Activated CD4-positive, alpha-beta T cell treated with anti-CD3 and anti-CD28 coated beads, Interleukin-2, amount 10 ng/mL, durations not matched to agents 24 days and 14 days (primary cell): ENCODE measurements at regions of chr15 and their contacts with region 1.

Region 1: DNA sequence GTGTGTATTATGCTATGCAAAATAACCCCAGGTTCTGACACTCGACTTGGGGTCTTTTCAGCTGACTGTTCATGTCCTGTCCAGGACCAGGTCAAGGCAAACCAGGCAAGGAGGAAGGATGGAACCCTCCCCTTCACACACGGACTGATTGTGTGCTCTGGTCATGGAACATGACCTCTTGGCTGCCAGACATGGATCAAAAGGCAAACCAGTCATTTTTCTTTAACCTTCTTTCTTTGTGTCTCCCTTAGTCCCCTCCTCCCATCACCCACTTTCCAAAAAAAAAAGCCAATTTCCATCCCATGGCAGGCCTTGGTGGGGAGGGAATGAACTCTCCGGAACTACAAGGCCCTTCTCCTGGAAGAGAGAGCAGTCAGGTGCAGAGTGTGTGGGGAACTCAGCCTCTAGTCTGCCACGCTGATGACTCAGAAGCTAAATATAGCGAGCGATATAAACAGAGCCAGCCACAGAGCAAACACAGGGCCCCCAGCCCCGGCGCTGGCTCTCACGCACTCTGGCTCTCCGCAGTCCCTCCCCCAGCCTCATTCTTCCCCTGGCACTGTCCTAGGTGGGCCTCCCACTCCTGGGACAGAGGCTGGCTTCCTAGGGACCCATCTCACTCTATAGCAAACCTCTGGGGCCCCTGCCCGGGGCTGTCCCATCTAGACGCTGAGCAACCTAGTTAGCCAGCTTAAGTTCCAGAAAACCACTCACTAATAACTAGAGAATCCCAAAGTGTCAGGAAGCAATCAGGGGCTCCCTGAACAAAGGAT is 10.0 kb downstream of the BMF start:
- DNase-seq: peak; percentile 92
- H3K4me3 Mint-ChIP-seq: peak overlapping the region; percentile 79
- H3K27ac Mint-ChIP-seq: peak overlapping the region; percentile 97
- H3K4me1 Mint-ChIP-seq: peaks cover 79% of the 10 kb centered on the region
- H3K27me3 Mint-ChIP-seq: no peaks in the 10 kb centered on the region

Region 2: GRCh38 chr15:40064221-40064894 is 34.3 kb before region 1 on chr15:
- intact Hi-C with region 1: loop called (anchors 1 kb)
- DNase-seq: no peak
- H3K4me3 Mint-ChIP-seq: peak overlapping the region; percentile 45
- H3K27ac Mint-ChIP-seq: peak overlapping the region; percentile 85
- H3K4me1 Mint-ChIP-seq: peaks cover 26% of the 10 kb centered on the region
- H3K27me3 Mint-ChIP-seq: no peaks in the 10 kb centered on the region

Region 3: DNA sequence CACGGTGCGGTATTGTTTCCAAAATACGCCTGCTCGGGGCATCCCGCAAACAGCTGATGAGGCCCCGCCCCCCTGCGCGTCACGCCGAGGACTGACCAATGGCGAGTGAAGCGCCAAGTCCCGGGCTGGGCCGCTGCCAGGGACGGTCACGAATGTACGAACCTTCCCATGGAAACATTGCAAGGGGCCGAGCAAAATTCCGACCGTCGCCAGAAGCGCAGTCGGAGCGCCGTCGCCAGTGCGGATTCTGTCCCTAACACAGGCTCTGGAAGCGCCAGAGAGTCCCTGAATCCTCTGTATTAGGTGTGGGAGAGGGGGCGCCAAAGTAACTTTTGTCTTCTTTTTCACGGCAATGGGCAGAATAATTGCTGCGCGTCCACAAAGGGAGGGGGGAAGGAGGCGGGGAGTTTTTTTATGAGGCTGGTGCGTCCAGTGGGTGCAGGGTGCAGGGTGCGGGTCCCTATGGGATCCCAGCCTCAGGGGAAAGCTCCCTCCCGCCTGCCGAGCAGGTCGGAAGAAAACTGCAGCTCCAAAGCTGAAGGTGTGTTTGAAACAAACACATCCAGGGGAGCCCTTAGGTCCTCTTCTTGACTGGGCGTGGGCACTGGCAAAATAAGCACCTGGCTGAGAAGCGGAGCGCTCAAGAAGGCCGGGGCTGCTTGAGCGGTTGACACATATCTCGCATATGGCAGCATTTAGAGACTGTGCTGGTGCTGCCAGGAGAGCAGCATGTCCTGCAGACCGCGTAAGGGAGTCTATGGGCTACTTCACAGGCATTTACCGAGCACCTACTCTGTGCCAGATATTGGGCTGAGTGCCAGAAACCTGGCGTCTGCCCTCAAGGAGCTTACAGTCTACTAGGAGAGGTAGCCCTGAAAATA is 10.4 kb after region 1 on chr15 and contains the start of gene BMF:
- intact Hi-C with region 1: loop called (anchors 1 kb)
- DNase-seq: peak; percentile 99
- H3K4me3 Mint-ChIP-seq: peak within 1 kb of the TSS; percentile 95
- H3K27ac Mint-ChIP-seq: peak within 1 kb of the TSS; percentile 85
- H3K4me1 Mint-ChIP-seq: peaks cover 53% of the 10 kb centered on the region
- H3K27me3 Mint-ChIP-seq: peaks cover 10% of the 10 kb centered on the region
- total RNA-seq, gene BMF: 8.4 and 9.1 TPM in 2 replicates

Region 4: DNA sequence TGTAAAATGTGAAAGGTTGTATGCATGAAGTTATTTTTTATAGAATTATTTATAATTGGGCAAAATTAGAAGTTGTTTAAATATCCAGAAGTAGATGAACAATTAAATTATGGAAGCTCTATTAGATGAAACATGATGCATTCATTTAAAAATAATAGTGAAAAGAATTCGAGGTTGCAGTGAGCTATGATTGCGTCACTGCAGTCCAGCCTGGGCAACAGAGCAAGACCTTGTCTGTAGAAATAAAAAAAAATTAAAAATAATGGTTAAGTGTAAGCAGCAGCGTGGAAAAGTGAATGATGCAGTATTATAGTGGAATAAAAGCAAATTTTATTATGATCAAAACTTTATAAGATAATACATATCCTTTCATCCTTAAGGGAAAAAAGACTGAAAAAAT is 76.5 kb after region 1 on chr15:
- intact Hi-C with region 1: no loop called
- DNase-seq: no peak
- H3K4me3 Mint-ChIP-seq: no peak overlapping the region
- H3K27ac Mint-ChIP-seq: no peak overlapping the region
- H3K4me1 Mint-ChIP-seq: peaks cover 18% of the 10 kb centered on the region
- H3K27me3 Mint-ChIP-seq: no peaks in the 10 kb centered on the region